ENCODE measurements at regions of chr6 and their contacts with region 1.

Region 1: DNA sequence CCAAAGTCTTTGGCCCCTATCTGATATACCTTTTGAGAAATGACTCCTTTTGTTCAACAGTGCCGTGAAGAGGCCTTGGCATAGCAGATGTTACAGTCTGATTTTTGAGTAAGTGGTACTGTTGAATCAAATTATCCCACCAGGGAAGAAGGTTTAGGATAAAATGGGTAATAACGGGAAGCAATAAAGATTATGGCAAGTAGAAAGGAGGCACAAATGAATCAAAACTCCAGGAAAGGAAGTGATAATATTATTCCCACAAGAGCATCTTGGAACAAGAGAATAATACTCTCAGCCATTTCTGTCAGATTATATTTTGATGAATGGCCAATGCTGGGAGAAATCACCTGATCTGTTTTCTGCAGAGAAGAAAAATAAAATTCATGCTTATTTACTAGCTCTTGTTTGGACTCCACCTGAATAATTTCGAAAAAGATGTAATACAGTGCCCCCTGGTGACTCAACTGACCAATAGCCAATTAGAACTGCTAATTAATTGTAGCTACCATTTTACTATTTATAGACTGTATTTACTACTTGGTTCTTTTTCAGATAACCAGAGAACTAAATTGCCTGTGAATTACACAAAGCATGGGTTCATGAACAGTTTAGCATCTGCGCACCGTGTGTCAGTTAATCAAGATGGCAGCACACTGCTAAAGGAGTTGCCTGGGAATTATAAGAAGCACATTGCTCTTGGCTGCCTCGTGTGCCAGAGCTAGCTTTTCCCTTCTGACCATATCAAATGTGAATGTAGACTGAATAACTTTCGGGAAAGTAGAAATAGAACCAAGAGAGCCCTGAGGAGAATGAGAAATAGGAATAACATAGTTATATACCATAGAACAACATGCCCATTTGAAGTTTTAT is 78.5 kb upstream of the TRDN start:
- DNase-seq: no peak
- ATAC-seq: peak; percentile 36 to 61
- H3K4me3 ChIP-seq: no peak overlapping the region
- H3K27ac ChIP-seq: no peak overlapping the region
- H3K4me1 ChIP-seq: no peaks in the 10 kb centered on the region
- H3K27me3 ChIP-seq: no peaks in the 10 kb centered on the region

Region 2: GRCh38 chr6:123415844-123416468 is 299.3 kb before region 1 on chr6:
- intact Hi-C with region 1: loop called (anchors 2 to 5 kb)
- DNase-seq: peak in 1 of 3 donors; percentile 43
- ATAC-seq: peak; percentile 41 to 54
- H3K4me3 ChIP-seq: no peak overlapping the region
- H3K27ac ChIP-seq: no peak overlapping the region
- H3K4me1 ChIP-seq: no peaks in the 10 kb centered on the region
- H3K27me3 ChIP-seq: no peaks in the 10 kb centered on the region

Region 3: GRCh38 chr6:123636782-123637181 is 78.5 kb before region 1 on chr6 and contains the start of gene TRDN:
- intact Hi-C with region 1: no loop called
- DNase-seq: no peak
- ATAC-seq: peak; percentile 85 to 91
- H3K4me3 ChIP-seq: peak within 1 kb of the TSS; percentile 84
- H3K27ac ChIP-seq: peak within 1 kb of the TSS; percentile 88
- H3K4me1 ChIP-seq: no peaks in the 10 kb centered on the region
- H3K27me3 ChIP-seq: no peaks in the 10 kb centered on the region
- total RNA-seq, gene TRDN: 261 to 360 (median 289) TPM